Right lobe of liver (tissue), 6 donors: ENCODE measurements at regions of chr4 and their contacts with region 1.

Region 1: DNA sequence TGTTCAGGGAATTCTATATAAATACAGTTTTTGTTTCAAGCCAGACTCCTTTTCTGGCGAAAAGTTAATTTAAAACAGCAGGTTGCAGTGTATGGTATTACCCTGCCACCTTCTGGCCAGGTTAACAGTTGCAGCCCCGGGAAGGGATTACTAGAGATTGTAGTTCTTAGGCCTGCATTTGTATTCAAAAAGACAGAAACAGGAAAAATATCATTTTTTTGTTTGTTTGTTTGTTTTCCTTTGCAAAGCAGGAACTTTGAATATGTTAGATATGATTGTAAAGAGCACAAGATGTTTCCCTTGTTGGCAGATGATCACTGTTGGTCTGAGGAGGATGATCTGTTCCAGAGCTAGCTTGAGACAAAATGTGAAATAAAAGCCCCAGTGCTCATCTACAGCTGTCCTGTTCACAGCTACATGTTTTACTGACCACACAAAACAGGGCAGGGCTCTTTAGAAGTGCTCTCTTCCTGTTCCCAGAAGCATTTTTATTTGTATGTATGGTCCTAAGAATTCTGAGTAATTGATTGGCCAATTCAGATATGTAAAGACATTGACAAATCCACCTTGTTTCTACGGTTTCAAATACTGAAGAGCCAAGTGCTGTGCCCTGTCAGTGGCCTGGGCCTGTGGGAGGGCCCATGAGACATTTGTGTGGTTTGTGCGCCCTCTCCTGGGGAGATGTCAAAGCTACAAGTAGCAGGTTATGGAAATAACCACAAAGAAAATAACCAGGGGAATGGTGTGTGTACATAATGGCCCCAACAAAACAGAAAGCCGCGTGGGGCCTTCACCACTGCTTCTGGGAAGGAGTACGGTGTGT is 57.9 kb downstream of the CLDN22 start:
- DNase-seq: peak; percentile 77 to 88 (median 81)
- ATAC-seq: peak; percentile 87 to 92 (median 91)
- H3K4me3 ChIP-seq: peak overlapping the region in 2 of 3 donors; percentile 19 to 39
- H3K27ac ChIP-seq: peak overlapping the region; percentile 25 to 72 (median 69)
- H3K4me1 ChIP-seq: peaks cover 0 to 35% (median 5%) of the 10 kb centered on the region in 4 donors
- H3K27me3 ChIP-seq: no peaks in the 10 kb centered on the region
- CTCF ChIP-seq: peak; percentile 78 to 94 (median 80)
- POLR2A ChIP-seq: no peak

Region 2: GRCh38 chr4:183074296-183074990 is 187.7 kb before region 1 on chr4:
- intact Hi-C with region 1: loop called (anchors 5 to 10 kb)
- DNase-seq: no peak
- ATAC-seq: no peak
- H3K4me3 ChIP-seq: no peak overlapping the region
- H3K27ac ChIP-seq: no peak overlapping the region
- H3K4me1 ChIP-seq: peaks cover 0 to 17% (median 0%) of the 10 kb centered on the region in 4 donors
- H3K27me3 ChIP-seq: no peaks in the 10 kb centered on the region
- CTCF ChIP-seq: no peak
- POLR2A ChIP-seq: no peak